Activated CD8-positive, alpha-beta memory T cell treated with anti-CD3 and anti-CD28 coated beads, Interleukin-2, amount 10 ng/mL, durations not matched to agents 7 days and 5 days (primary cell): ENCODE measurements at regions of chr1 and their contacts with region 1.

Region 1: GRCh38 chr1:201559679-201560162 is 20.8 kb downstream of the NAV1 start:
- DNase-seq: peak; percentile 76
- ATAC-seq: peak; percentile 94
- H3K4me3 Mint-ChIP-seq: no peak overlapping the region
- H3K27ac Mint-ChIP-seq: no peak overlapping the region
- H3K4me1 Mint-ChIP-seq: peaks cover 3% of the 10 kb centered on the region
- H3K27me3 Mint-ChIP-seq: peaks cover 4% of the 10 kb centered on the region

Region 2: DNA sequence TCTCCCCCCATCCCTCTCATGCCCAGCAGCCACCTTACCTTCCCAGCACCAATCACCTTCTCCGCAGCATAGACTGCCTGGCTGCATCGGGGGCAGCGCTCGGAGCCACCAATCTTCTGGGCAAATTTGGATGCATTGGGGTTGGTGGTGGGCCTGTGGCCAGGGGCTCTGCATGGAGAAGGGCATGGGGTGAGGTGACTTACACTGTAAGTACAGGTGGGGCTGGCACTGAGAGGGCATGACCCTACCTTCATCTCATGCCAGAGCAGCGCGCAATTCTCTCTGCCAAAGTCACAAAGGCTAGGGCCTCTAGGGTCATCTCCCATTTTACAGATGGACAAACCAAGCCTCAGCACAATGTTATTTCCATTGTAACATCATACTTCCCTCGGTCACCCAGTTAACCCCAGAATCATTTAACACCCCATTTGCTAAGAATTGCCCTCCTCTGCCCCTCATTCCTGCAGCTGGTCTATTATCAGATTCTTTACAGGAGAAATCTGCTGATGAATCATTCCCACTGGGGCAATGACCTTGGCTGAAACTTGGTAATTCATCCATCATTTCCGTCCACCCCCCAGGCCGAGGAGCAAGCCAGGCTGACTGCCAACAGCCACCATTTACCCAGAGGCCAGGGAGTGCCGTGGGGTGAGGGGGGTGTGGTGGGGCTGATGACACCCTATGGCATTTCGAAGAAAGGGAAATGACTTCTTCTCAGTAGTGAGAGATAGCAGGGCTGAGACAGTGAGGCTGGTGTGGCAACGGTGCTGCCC is 70.7 kb before region 1 on chr1:
- CTCF ChIA-PET with region 1: no interaction called
- DNase-seq: no peak
- ATAC-seq: no peak
- H3K4me3 Mint-ChIP-seq: no peak overlapping the region
- H3K27ac Mint-ChIP-seq: no peak overlapping the region
- H3K4me1 Mint-ChIP-seq: peaks cover 16% of the 10 kb centered on the region
- H3K27me3 Mint-ChIP-seq: no peaks in the 10 kb centered on the region

Region 3: DNA sequence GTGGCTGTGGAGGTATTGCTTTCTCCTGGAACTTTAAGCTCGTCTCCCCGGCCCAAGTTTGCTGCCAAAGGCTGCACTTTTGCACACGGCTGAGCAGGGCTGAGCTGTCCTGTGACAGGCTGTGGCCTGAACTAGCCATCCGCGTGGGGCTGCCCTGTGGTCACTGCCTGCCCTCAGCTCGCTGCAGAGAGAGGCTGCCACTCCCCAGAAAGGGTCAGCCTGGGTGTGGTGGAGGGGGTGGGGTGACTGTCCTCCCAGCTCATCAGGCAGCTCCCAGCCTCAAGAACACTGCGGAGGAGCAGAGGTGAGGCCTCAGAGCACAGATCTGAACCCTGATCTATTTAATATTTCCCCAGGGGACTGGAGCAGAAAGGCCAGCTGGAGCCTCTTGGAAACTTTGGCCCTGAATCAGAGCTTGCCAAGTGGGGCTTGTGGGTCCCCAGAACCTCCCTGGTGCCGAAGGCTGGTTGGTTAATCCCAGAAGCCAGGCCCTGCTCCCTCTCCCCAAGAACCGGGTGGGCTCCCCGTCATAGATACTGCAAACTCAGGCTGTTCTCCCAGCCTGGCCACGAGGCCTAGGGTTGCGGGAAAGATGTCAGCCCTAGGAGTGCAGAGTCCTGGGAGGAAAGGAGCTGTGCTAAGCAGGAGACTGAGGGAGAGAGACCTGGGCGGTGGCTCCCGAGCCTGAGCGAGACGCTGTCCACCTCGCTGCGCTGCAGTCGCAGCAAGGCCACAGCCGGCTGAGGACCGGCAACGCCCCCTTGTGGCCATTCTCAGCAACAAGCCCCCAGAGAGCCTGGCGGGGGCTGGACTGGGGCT is 144.1 kb after region 1 on chr1:
- CTCF ChIA-PET with region 1: interaction called, 60 read pairs
- DNase-seq: peak; percentile 76
- ATAC-seq: peak; percentile 86
- H3K4me3 Mint-ChIP-seq: no peak overlapping the region
- H3K27ac Mint-ChIP-seq: no peak overlapping the region
- H3K4me1 Mint-ChIP-seq: no peaks in the 10 kb centered on the region
- H3K27me3 Mint-ChIP-seq: peaks cover 18% of the 10 kb centered on the region

Region 4: GRCh38 chr1:201709564-201710295 is 150.0 kb after region 1 on chr1:
- CTCF ChIA-PET with region 1: interaction called, 60 read pairs
- DNase-seq: peak; percentile 73
- ATAC-seq: peak; percentile 95
- H3K4me3 Mint-ChIP-seq: no peak overlapping the region
- H3K27ac Mint-ChIP-seq: no peak overlapping the region
- H3K4me1 Mint-ChIP-seq: no peaks in the 10 kb centered on the region
- H3K27me3 Mint-ChIP-seq: peaks cover 9% of the 10 kb centered on the region